ENCODE measurements at regions of chr9 and their contacts with region 1.

Region 1: GRCh38 chr9:117644133-117644931 is 59.9 kb upstream of the TLR4 start:
- H3K4me3 Mint-ChIP-seq: peak overlapping the region; percentile 53
- H3K27ac Mint-ChIP-seq: peak overlapping the region; percentile 36
- H3K4me1 Mint-ChIP-seq: peaks cover 30% of the 10 kb centered on the region
- H3K27me3 Mint-ChIP-seq: peaks cover 32% of the 10 kb centered on the region

Region 2: DNA sequence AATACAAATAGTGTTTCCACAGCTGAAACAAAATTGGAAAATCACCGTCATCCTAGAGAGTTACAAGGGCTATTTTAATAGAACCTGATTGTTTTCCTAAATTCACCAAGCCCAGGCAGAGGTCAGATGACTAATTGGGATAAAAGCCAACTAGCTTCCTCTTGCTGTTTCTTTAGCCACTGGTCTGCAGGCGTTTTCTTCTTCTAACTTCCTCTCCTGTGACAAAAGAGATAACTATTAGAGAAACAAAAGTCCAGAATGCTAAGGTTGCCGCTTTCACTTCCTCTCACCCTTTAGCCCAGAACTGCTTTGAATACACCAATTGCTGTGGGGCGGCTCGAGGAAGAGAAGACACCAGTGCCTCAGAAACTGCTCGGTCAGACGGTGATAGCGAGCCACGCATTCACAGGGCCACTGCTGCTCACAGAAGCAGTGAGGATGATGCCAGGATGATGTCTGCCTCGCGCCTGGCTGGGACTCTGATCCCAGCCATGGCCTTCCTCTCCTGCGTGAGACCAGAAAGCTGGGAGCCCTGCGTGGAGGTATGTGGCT is 59.8 kb after region 1 on chr9 and contains the start of gene TLR4:
- intact Hi-C with region 1: loop called (anchors 5 kb)
- H3K4me3 Mint-ChIP-seq: peak within 1 kb of the TSS; percentile 98
- H3K27ac Mint-ChIP-seq: peak within 1 kb of the TSS; percentile 98
- H3K4me1 Mint-ChIP-seq: peaks cover 67% of the 10 kb centered on the region
- H3K27me3 Mint-ChIP-seq: no peaks in the 10 kb centered on the region

Region 3: DNA sequence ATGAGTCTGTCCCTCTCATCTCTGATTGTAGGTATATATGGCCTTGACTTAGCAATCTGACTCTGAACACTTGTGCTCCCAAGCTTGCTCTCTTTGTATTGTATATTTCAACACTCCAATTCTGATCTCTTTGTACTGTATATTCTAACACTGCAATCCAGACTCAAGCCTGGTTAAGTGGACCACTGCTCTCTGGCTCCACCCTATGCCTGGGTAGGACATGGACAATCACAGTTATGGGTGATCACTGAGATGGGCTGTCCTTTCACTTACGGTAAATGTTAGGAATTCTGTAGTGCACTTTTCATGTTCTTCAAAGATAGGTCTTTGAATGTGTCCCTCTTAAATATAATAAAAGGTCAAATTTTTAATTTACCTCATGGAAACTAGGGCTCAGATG is 225.0 kb after region 1 on chr9:
- intact Hi-C with region 1: loop called (anchors 5 kb)
- H3K4me3 Mint-ChIP-seq: no peak overlapping the region
- H3K27ac Mint-ChIP-seq: no peak overlapping the region
- H3K4me1 Mint-ChIP-seq: peaks cover 13% of the 10 kb centered on the region
- H3K27me3 Mint-ChIP-seq: peaks cover 33% of the 10 kb centered on the region

Region 4: DNA sequence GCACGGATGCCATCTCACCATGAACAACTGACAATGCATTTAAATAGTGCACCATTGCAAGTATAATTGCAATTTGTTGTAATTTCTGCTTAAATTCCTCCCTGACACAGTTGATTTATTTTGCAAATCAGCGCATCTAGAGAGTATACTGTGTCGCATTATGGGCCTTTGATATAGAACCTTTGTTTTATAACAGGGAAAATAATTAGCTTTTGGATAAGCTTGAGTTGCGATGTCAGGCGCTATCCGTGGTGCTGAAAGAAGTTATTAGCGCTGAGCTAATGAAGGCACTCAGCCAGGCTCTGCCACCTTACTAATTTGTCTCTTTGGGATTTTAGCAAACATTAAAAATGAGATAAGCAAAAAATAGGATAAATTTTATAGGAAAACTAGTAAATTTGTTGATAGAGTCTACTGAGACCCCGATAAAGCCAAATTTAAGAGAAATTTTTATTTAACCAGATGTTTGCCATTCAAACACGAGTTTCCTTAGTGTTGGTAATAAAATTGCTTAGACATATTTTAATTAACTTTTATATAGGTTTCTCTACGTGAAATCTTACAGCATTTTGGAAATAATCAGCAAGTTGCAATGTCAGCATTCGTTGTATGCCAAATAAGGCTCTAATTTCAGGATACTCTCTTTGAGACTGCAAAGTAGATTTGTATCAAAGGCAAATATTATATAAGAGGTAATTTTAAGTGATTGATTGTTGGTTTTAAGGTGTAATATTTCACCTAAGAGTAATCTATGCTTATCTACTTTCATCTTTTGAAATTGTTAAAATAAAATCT is 415.3 kb after region 1 on chr9:
- intact Hi-C with region 1: loop called (anchors 10 kb)
- H3K4me3 Mint-ChIP-seq: no peak overlapping the region
- H3K27ac Mint-ChIP-seq: no peak overlapping the region
- H3K4me1 Mint-ChIP-seq: no peaks in the 10 kb centered on the region
- H3K27me3 Mint-ChIP-seq: no peaks in the 10 kb centered on the region

Region 5: GRCh38 chr9:119289740-119290433 is 1645.6 kb after region 1 on chr9:
- intact Hi-C with region 1: loop called (anchors 2 kb)
- H3K4me3 Mint-ChIP-seq: no peak overlapping the region
- H3K27ac Mint-ChIP-seq: no peak overlapping the region
- H3K4me1 Mint-ChIP-seq: no peaks in the 10 kb centered on the region
- H3K27me3 Mint-ChIP-seq: peaks cover 4% of the 10 kb centered on the region

Region 6: DNA sequence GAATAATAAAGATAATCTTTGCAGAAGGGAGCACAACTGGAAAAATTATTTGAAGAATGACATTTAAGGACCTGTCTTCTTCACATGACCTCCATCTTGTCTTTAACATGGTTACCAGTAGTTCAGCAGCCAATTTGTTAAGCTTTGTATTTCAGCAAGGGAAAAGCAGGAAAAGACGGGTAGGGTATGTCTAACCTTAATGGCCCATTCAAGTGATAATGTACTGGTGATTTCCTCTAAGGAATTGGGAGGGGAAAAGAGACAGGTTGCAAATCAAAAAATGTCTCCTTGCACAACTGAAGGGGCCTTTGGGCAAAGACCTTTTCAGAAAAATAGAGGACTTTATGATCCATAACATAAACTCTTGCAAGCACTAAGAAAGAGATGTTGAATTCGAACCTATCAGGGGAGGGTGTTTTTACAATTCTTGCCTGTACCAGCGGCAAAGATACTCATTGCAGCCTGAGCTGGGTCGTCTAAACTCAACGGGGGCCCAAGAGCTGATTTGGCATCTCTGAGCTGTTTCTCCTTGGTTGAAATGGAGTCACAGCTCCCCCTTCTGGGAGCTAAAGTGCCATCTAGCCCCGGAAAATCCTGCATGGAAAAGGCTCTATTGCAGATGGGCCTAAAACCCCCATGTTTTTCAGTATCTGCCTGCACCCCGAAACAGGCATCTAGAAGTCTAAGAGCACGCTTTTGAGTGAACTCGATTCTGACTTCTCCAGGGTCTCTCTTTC is 1721.1 kb after region 1 on chr9:
- intact Hi-C with region 1: loop called (anchors 5 kb)
- H3K4me3 Mint-ChIP-seq: no peak overlapping the region
- H3K27ac Mint-ChIP-seq: no peak overlapping the region
- H3K4me1 Mint-ChIP-seq: peaks cover 5% of the 10 kb centered on the region
- H3K27me3 Mint-ChIP-seq: peaks cover 38% of the 10 kb centered on the region

Measured in dendritic cell treated with granulocyte-macrophage colony-stimulating factor and Interleukin-4, amounts not matched to agents 40 ng/mL and 50 ng/mL, for 4 days (primary cell).